HEK293 (cell line): ENCODE measurements at regions of chr18 and their contacts with region 1.

Region 1: GRCh38 chr18:6521795-6522418 is 107.2 kb upstream of the L3MBTL4 start:
- H3K4me3 ChIP-seq: no peak overlapping the region
- H3K27ac ChIP-seq: no peak overlapping the region
- H3K4me1 ChIP-seq: no peaks in the 10 kb centered on the region
- CTCF ChIP-seq: 0 out of 2 replicates have a peak, but pooled peaks have one; percentile 17

Region 2: GRCh38 chr18:5868218-5869115 is 653.4 kb before region 1 on chr18:
- CTCF ChIA-PET with region 1: interaction called, 11 read pairs
- POLR2A ChIA-PET with region 1: no interaction called
- H3K4me3 ChIP-seq: no peak overlapping the region
- H3K27ac ChIP-seq: no peak overlapping the region
- H3K4me1 ChIP-seq: no peaks in the 10 kb centered on the region
- CTCF ChIP-seq: peak; percentile 52

Region 3: GRCh38 chr18:5890331-5891183 is 631.4 kb before region 1 on chr18:
- CTCF ChIA-PET with region 1: interaction called, 20 read pairs
- POLR2A ChIA-PET with region 1: no interaction called
- H3K4me3 ChIP-seq: peak overlapping the region; percentile 38
- H3K27ac ChIP-seq: peak overlapping the region; percentile 56; the same call in 1 of the 2 replicates
- H3K4me1 ChIP-seq: peaks cover 20% of the 10 kb centered on the region
- CTCF ChIP-seq: no peak

Region 4: GRCh38 chr18:6509832-6510231 is 12.1 kb before region 1 on chr18:
- CTCF ChIA-PET with region 1: interaction called, 10 read pairs
- POLR2A ChIA-PET with region 1: no interaction called
- H3K4me3 ChIP-seq: no peak overlapping the region
- H3K27ac ChIP-seq: no peak overlapping the region
- H3K4me1 ChIP-seq: peaks cover 12% of the 10 kb centered on the region
- CTCF ChIP-seq: no peak

Region 5: GRCh38 chr18:6711467-6711866 is 189.6 kb after region 1 on chr18:
- CTCF ChIA-PET with region 1: no interaction called
- POLR2A ChIA-PET with region 1: no interaction called
- H3K4me3 ChIP-seq: no peak overlapping the region
- H3K27ac ChIP-seq: no peak overlapping the region
- H3K4me1 ChIP-seq: no peaks in the 10 kb centered on the region
- CTCF ChIP-seq: no peak

Region 6: GRCh38 chr18:6785001-6785400 is 263.1 kb after region 1 on chr18:
- CTCF ChIA-PET with region 1: interaction called, 10 read pairs
- POLR2A ChIA-PET with region 1: no interaction called
- H3K4me3 ChIP-seq: no peak overlapping the region
- H3K27ac ChIP-seq: no peak overlapping the region
- H3K4me1 ChIP-seq: peaks cover 17% of the 10 kb centered on the region
- CTCF ChIP-seq: no peak